A673 (cell line): ENCODE measurements at regions of chr10 and their contacts with region 1.

Region 1: DNA sequence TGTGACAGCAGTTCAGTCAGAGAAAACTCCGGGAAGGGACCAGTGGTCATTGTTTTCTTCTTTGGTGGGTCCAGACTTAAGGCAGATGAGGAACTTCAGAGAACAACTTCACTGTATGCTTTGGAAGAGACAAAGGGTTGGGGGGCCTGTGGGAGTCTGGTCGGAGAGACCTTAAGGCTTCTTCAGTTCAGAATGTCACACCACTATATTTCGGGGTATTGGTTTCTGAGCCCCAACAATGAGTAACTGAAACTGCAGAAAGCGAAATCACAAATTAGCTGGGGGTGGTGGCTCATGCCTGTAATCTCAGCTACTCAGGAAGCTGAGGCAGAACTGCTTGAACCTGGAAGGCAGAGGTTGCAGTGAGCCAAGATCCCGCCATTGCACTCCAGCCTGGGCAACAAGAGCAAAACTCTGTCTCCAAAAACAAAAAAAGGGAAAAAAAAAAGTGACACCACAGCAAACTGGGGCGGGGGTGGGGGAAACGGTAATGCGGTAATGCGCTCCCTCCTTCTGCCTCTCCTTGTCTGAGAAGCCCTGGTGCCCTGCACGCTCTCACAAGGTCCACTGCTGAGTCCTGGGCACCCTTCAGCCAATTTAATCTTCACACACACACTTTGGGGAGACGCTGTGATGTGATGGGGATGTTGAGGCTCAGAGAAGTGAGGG is 2.2 kb upstream of the ADIRF start:
- DNase-seq: no peak
- H3K4me3 ChIP-seq: no peak overlapping the region
- H3K27ac ChIP-seq: no peak overlapping the region
- H3K4me1 ChIP-seq: peaks cover 6% of the 10 kb centered on the region
- H3K27me3 ChIP-seq: no peaks in the 10 kb centered on the region
- CTCF ChIP-seq: no peak

Region 2: DNA sequence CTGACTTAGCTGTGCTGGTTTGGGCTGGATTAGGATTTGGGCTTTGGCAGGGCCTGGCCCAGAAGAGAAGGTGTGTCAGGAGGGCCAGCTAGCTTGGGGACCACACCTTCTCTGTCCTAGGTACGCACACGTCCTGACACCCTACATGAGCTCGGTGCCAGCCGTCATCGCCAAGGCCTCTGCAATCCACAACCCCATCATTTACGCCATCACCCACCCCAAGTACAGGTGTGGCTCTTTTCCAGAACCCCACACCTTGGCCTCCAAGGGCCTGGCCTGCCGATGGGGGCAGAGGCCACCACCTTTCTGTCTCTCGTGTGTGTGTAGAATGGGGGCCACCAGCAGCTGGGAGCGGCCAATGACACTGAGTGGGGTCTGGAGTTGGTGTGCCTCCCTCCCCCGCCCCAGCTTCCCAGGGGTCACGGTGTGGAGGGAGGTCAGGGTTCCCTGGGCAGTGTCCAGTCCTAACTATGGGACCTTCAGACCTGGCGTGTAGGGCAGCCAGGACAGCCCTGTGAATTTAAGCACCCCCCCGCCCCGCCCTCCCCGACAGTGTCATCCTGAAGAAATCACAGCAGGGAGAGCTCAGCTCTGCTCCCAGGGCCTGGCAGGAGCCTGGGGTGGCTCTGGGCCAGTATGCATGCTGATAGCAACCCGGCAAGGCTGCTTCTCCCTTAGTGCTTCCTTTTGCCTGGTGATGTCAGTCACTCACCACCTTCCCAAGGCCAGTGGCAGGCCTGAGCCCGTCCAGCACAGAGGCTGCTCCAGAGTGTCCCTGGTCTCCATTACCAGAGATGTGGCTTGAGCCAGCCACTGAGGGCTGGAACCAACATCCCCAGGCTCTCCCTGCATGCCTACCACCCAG is 304.7 kb before region 1 on chr10:
- CTCF ChIA-PET with region 1: interaction called, 12 read pairs
- POLR2A ChIA-PET with region 1: no interaction called
- intact Hi-C with region 1: no loop called
- DNase-seq: no peak
- H3K4me3 ChIP-seq: no peak overlapping the region
- H3K27ac ChIP-seq: no peak overlapping the region
- H3K4me1 ChIP-seq: no peaks in the 10 kb centered on the region
- H3K27me3 ChIP-seq: no peaks in the 10 kb centered on the region
- CTCF ChIP-seq: no peak

Region 3: DNA sequence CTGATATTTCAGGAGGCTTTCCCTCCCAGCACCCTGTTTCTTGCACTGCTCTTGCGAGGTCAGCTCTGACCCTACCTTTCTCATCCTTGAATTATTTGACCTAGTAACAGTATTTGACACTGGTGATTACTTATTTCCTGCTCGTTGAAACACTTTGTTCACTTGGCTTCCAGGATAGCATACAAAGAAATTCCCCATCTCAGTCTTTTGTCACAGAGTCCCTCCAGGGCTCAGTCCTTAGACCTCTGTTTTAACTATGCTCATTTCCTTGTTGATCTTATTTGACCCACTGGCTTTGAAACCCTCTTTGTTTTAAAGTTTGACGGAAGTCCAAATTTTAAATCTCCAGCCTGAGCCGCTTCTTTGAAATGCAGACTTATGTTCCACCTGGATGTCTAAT is 179.8 kb before region 1 on chr10:
- CTCF ChIA-PET with region 1: no interaction called
- POLR2A ChIA-PET with region 1: no interaction called
- intact Hi-C with region 1: no loop called
- DNase-seq: no peak
- H3K4me3 ChIP-seq: no peak overlapping the region
- H3K27ac ChIP-seq: peak overlapping the region; percentile 45
- H3K4me1 ChIP-seq: peaks cover 25% of the 10 kb centered on the region
- H3K27me3 ChIP-seq: no peaks in the 10 kb centered on the region
- CTCF ChIP-seq: no peak

Region 4: DNA sequence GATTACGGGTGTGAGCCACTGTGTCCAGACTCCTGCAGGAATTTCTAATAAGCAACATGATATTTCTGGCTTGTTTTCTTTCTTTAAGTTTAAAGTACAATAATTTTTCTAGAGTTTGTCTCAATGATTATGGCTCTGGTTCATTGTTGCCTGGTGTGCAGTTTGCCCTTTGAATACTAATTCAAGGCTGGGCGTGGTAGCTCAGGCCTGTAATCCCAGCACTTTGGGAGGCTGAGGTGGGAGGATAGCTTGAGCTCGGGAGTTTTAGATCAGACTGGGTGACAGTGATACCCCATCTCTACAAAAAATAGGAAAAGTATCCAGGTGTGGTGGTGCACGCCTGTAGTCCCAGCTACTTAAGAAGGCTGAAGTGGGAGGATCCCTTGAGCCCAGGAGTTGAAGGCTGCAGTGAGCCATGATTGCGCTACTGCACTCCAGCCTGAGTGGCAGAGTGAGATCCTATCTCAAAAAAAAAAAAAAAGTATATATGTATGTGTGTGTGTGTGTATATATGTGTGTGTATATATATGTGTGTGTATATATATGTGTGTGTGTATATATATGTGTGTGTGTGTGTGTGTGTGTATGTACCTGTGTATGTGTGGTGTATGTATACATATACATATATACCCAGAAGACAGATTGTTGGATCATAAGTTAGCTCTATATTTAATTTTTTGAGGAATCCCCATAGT is 10.4 kb after region 1 on chr10:
- CTCF ChIA-PET with region 1: interaction called, 5 read pairs
- POLR2A ChIA-PET with region 1: interaction called, 12 read pairs
- intact Hi-C with region 1: no loop called
- DNase-seq: no peak
- H3K4me3 ChIP-seq: no peak overlapping the region
- H3K27ac ChIP-seq: no peak overlapping the region
- H3K4me1 ChIP-seq: peaks cover 5% of the 10 kb centered on the region
- H3K27me3 ChIP-seq: no peaks in the 10 kb centered on the region
- CTCF ChIP-seq: no peak

Region 5: DNA sequence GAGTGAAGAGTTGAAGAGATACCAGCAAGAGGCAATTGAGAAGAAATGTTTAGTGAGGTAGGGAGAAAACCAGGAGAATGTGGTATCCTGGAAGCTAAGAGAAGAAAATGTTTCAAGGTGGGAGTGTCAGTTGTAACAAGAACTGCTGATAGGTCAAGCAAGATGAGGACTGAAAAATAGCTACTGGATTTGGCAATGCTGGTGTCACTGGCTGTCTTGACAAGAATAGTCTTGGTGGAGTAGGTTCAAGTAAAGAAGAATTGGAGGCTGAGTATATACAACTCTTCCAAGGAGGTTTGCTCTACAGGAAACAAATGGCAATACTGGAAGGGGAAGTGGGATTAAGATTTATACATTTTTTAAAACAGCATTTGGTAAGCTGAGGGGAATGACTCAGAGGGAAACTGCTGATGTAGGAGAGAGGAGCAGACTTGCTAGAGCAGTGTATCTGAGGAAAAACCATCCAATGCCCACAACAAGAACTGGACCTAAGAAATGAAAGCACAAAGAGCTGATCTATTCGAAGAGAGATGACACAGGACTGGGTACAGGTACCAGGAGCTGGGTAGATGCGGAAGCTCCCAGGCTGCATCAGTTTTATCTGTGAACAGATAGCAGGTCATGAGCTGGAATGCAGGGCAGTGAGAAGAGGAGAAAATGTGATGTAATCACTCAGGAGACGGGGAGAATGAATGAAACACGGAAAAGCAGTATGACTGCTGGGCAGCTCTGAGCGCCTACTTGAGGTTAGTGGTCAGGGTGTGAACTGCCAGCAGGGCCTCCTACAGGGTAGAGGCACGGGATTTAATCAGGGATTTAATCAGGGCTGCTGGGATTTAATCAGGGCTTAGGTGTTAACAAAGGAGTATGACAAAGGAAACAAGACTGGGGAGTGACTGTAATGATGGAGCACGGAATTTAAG is 88.5 kb after region 1 on chr10:
- CTCF ChIA-PET with region 1: interaction called, 13 read pairs
- POLR2A ChIA-PET with region 1: no interaction called
- intact Hi-C with region 1: no loop called
- DNase-seq: peak; percentile 56
- H3K4me3 ChIP-seq: no peak overlapping the region
- H3K27ac ChIP-seq: peak overlapping the region; percentile 42
- H3K4me1 ChIP-seq: peaks cover 52% of the 10 kb centered on the region
- H3K27me3 ChIP-seq: no peaks in the 10 kb centered on the region
- CTCF ChIP-seq: 0 out of 2 replicates have a peak, but pooled peaks have one; percentile 19